Endothelial cell of umbilical vein (primary cell): ENCODE measurements at regions of chr22 and their contacts with region 1.

Region 1: DNA sequence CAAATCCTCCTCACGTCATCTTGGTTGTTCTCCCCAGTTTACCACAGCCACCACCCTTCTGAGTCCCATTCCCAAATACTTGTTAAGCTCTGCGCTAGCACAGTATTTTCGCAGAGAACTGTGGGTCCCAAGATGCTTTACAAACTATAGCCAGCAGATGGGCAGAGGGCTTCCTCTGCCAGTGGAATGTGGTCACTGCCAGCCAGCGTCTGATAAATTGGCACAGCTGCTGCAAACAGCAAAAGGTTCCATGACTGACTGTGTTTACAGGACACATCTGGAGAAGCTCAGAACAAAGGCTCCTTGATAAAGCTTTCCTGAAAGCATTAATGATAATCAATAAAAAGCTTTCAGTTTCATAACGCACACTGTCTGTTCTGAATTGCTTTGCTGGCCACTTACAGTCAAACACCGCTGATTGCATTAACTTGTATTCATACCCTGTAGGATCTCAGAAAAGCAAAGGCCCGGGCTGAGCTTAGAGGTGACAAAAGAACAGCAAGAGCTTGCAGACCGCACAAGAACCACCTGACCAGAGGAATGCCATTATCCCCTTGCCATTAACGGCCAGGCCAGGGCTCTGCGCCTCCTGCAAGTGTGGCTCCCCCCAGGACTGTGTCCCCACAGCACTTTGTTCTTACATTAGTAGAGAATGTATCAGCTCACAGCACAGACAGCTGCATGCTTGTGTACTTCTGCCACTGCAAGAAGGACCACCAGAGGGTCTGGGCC is 120.6 kb downstream of the MICAL3 start:
- DNase-seq: peak; percentile 65
- H3K4me3 ChIP-seq: no peak overlapping the region
- H3K27ac ChIP-seq: no peak overlapping the region
- H3K4me1 ChIP-seq: no peaks in the 10 kb centered on the region
- H3K27me3 ChIP-seq: no peaks in the 10 kb centered on the region
- CTCF ChIP-seq: no peak
- POLR2A ChIP-seq: no peak

Region 2: DNA sequence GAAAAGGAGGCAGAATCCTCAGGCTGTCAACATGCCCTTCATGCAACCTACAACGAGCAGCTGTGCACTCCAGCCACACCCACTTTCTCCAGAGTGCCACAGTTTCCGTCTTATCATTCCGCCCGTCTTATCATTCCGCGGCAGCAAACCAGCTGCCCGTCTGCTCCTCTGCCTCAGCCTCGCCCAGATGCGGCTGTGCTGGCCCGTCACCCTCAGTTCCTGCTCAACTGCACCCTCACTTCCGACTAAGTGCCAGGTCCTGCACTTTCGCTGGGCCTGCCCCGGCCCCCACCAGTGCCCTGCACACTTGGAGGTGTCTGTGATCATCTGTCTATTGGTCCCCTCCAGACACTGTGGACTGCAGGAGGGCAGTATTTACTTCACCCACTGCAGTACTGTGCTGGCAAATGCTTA is 76.9 kb after region 1 on chr22:
- CTCF ChIA-PET with region 1: no interaction called
- POLR2A ChIA-PET with region 1: no interaction called
- dilution Hi-C with region 1: no loop called
- intact Hi-C with region 1: loop called (anchors 2 kb)
- DNase-seq: peak; percentile 58
- H3K4me3 ChIP-seq: no peak overlapping the region
- H3K27ac ChIP-seq: no peak overlapping the region
- H3K4me1 ChIP-seq: peaks cover 23% of the 10 kb centered on the region
- H3K27me3 ChIP-seq: no peaks in the 10 kb centered on the region
- CTCF ChIP-seq: no peak
- POLR2A ChIP-seq: no peak

Region 3: GRCh38 chr22:18001040-18001893 is 97.5 kb after region 1 on chr22:
- CTCF ChIA-PET with region 1: no interaction called
- POLR2A ChIA-PET with region 1: no interaction called
- dilution Hi-C with region 1: no loop called
- intact Hi-C with region 1: no loop called
- DNase-seq: peak; percentile 96
- H3K4me3 ChIP-seq: peak overlapping the region; percentile 45 to 86 (median 82)
- H3K27ac ChIP-seq: peak overlapping the region; percentile 64
- H3K4me1 ChIP-seq: peaks cover 5% of the 10 kb centered on the region
- H3K27me3 ChIP-seq: no peaks in the 10 kb centered on the region
- CTCF ChIP-seq: peak; percentile 31 to 41
- POLR2A ChIP-seq: peak; percentile 89